ENCODE measurements at regions of chr3 and their contacts with region 1.

Region 1: GRCh38 chr3:186406669-186407635 is 44.9 kb upstream of the DGKG start:
- DNase-seq: peak; percentile 51 to 92
- ATAC-seq: peak; percentile 92 to 98 (median 96)
- H3K4me3 ChIP-seq: no peak overlapping the region
- H3K27ac ChIP-seq: peak overlapping the region; percentile 67 to 95 (median 89)
- H3K4me1 ChIP-seq: peaks cover 6 to 28% (median 11%) of the 10 kb centered on the region in 9 donors
- H3K27me3 ChIP-seq: no peaks in the 10 kb centered on the region
- CTCF ChIP-seq: no peak

Region 2: DNA sequence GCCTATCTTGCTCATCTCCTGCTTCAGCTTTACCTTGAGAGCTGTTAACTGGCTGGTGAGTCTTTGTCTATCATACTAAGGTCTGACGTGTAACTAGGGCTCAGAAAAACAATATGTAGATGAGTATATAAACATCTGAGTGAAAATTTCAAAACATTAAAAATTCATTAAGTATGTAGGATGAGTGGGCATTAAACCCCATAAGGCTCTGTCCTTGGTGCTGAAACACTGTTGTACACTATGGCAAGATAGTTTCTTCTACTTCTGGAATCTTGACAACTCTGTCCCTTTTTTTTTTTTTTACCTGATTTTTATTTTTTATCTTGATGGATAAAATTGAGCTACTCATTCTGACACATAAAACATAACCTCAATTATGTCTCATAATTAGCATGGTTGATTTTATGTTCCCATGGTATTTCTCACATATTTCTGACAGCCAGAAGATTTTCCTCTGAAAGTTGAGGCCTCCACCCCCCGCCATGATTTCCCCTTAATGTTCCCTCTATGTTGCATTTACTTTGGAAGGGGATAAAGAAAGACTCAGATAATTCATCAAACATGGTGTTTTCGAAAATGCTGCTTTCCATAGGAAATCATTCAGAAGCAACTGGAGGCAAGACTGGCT is 99.2 kb before region 1 on chr3:
- intact Hi-C with region 1: no loop called
- DNase-seq: no peak
- ATAC-seq: no peak
- H3K4me3 ChIP-seq: no peak overlapping the region
- H3K27ac ChIP-seq: no peak overlapping the region
- H3K4me1 ChIP-seq: peaks cover 0 to 5% (median 0%) of the 10 kb centered on the region in 9 donors
- H3K27me3 ChIP-seq: no peaks in the 10 kb centered on the region
- CTCF ChIP-seq: no peak

Region 3: GRCh38 chr3:186381424-186382216 is 25.3 kb before region 1 on chr3:
- intact Hi-C with region 1: loop called in 2 of 10 experiments (anchors 1 to 2 kb)
- DNase-seq: no peak
- ATAC-seq: no peak
- H3K4me3 ChIP-seq: no peak overlapping the region
- H3K27ac ChIP-seq: peak overlapping the region in 7 of 10 donors; percentile 85 to 95 (median 92)
- H3K4me1 ChIP-seq: peaks cover 6 to 42% (median 24%) of the 10 kb centered on the region in 9 donors
- H3K27me3 ChIP-seq: no peaks in the 10 kb centered on the region
- CTCF ChIP-seq: no peak